Left ventricle myocardium inferior (tissue), 1 donor: ENCODE measurements at regions of chr3 and their contacts with region 1.

Region 1: DNA sequence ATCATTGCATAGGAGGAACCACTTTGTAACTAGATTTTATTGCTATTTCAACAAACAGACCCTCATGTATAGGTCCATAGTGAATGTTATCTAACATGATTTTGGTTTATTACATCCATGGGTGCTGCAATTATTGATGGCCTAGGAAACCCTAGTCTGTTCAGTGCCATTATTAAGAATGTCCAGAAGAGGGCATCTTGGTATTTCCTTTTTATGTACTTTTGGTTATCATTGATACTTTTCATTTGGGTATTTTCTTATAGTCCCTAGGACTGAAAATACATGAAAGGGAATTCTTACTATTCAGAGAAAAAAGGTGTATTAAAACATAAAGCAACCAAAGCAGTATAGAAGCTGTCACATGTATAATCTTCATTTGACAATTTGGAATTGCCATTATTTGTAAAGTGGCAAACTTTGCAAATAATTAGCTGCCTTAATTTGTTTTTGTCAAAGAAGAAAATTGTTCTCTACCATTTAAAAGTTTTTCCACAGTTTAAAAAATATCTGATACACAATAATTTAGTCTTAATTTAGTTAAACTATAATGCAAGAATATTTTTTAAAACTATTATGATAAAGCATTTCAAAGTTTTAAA is 48.7 kb downstream of the CNOT10 start:
- DNase-seq: no peak
- H3K4me3 ChIP-seq: no peak overlapping the region
- H3K27ac ChIP-seq: no peak overlapping the region
- H3K4me1 ChIP-seq: no peaks in the 10 kb centered on the region
- H3K27me3 ChIP-seq: no peaks in the 10 kb centered on the region
- CTCF ChIP-seq: peak; percentile 67

Region 2: DNA sequence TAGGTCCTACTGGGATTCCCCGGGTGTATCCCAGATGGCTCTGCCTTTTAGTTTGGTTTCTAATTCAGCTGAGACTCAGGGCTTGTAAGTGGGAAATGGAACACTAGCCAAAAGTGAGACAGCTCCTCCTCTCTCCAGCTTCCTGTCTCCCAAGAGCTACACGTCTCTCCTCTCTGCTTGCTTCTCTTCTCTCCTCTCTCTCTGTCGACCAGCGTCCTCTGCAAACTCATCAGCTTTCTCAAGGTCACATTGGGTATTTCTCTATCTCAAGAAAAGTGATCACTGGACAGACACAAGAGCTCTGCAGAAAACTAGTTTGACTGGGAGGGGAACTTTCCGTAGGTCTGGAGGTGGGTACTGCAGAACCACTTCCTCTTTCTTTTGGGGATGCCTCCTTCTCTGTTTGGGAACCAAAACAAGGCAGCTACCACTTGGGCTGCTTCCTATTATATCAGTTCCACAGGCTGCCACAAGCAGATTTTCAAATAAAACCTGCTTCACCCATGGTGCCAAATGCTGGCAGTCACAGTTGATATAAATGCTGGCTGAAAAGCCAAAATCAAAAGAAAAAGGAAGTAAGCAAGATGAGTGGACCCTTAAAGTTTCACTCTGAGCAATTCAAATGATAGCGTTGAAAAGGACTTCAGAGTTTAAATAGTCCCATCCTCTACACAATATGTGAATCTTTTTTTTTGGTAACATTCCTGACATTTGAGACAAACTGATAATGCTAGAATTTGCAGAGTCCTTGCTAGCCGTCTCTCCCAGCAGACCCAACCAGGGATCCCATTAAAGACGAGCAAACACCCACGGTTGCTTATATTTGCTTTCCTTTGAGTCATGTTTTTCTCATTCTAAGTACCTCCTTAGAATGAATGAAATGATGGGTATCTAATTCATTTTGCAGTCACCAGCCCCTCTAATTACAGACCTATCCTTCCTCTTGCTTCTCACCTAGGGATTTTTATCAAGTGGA is 155.9 kb before region 1 on chr3:
- intact Hi-C with region 1: no loop called
- DNase-seq: no peak
- H3K4me3 ChIP-seq: peak overlapping the region; percentile 47
- H3K27ac ChIP-seq: peak overlapping the region; percentile 85
- H3K4me1 ChIP-seq: peaks cover 32% of the 10 kb centered on the region
- H3K27me3 ChIP-seq: no peaks in the 10 kb centered on the region
- CTCF ChIP-seq: peak; percentile 12

Region 3: GRCh38 chr3:32934150-32934742 is 200.5 kb after region 1 on chr3:
- intact Hi-C with region 1: loop called (anchors 10 kb)
- DNase-seq: no peak
- H3K4me3 ChIP-seq: no peak overlapping the region
- H3K27ac ChIP-seq: no peak overlapping the region
- H3K4me1 ChIP-seq: no peaks in the 10 kb centered on the region
- H3K27me3 ChIP-seq: no peaks in the 10 kb centered on the region
- CTCF ChIP-seq: peak; percentile 70